ENCODE measurements at regions of chr4 and their contacts with region 1.

Region 1: DNA sequence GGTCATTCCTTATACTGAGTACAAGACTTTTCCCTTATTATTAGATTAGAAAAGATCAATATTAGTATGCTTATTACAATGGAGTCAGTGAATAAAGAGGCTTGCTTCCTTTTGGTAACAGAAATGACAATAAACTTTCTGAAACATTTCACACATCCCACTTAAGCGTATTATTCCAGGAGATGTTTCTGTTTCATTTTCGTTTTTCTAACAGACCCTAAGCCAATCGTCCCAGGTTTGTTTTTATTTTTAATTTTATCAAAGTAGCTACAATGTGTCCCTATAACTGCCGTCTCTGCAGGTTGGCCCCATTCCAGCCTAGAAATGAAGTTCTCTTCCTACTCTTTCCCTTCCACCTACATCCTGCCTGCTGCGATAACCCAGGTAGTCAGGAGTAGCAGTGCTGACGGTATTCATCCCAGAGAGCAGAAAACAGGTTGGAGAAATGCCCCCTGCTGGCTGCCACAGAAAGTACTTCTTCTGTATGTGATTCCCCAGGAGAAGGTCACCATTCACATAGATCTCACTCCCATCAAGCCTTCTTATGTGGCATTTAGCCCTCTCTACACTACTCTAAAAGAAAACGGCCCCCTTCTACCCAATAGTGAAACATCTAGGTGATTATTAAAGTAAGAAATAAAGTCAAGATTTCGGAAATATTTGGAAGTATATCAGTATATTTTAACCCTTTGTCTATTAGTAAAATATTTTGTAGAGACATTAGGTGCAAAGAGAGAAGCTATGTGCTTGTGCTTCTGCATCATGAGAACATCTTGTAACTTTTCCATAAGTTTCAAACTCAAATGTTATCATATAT is 40.4 kb downstream of the ENPEP start:
- DNase-seq: peak; percentile 58 to 87
- ATAC-seq: peak; percentile 85 to 93 (median 92)
- H3K4me3 ChIP-seq: peak overlapping the region; percentile 69
- H3K4me3 Mint-ChIP-seq: peak overlapping the region; percentile 98
- H3K27ac ChIP-seq: peak overlapping the region; percentile 16
- H3K27ac Mint-ChIP-seq: peak overlapping the region; percentile 71 to 88
- H3K4me1 ChIP-seq: no peaks in the 10 kb centered on the region
- H3K4me1 Mint-ChIP-seq: peaks cover 18% of the 10 kb centered on the region in 2 donors
- H3K27me3 ChIP-seq: no peaks in the 10 kb centered on the region
- H3K27me3 Mint-ChIP-seq: peaks cover 8 to 33% of the 10 kb centered on the region in 2 donors
- CTCF ChIP-seq: peak; percentile 76

Region 2: GRCh38 chr4:109433205-109434006 is 1082.9 kb before region 1 on chr4 and contains the start of gene SEC24B:
- intact Hi-C with region 1: loop called (anchors 10 kb)
- DNase-seq: peak; percentile 87 to 95
- ATAC-seq: peak; percentile 85 to 94 (median 88)
- H3K4me3 ChIP-seq: peak within 1 kb of the TSS; percentile 87
- H3K4me3 Mint-ChIP-seq: peak within 1 kb of the TSS; percentile 84
- H3K27ac ChIP-seq: peak within 1 kb of the TSS; percentile 97
- H3K27ac Mint-ChIP-seq: peak within 1 kb of the TSS; percentile 87
- H3K4me1 ChIP-seq: peaks cover 33% of the 10 kb centered on the region
- H3K4me1 Mint-ChIP-seq: peaks cover 39 to 53% of the 10 kb centered on the region in 2 donors
- H3K27me3 ChIP-seq: no peaks in the 10 kb centered on the region
- H3K27me3 Mint-ChIP-seq: no peaks in the 10 kb centered on the region
- CTCF ChIP-seq: peak; percentile 95
- total RNA-seq, gene SEC24B: 38.6 to 43.9 (median 40.7) TPM

Region 3: GRCh38 chr4:109998867-109999584 is 517.3 kb before region 1 on chr4:
- intact Hi-C with region 1: loop called (anchors 1 kb)
- DNase-seq: peak in 1 of 2 donors; percentile 85
- ATAC-seq: peak; percentile 72 to 83 (median 76)
- H3K4me3 ChIP-seq: no peak overlapping the region
- H3K4me3 Mint-ChIP-seq: no peak overlapping the region
- H3K27ac ChIP-seq: no peak overlapping the region
- H3K27ac Mint-ChIP-seq: no peak overlapping the region
- H3K4me1 ChIP-seq: no peaks in the 10 kb centered on the region
- H3K4me1 Mint-ChIP-seq: no peaks in the 10 kb centered on the region
- H3K27me3 ChIP-seq: no peaks in the 10 kb centered on the region
- H3K27me3 Mint-ChIP-seq: peaks cover 0 to 19% of the 10 kb centered on the region in 2 donors
- CTCF ChIP-seq: peak; percentile 87

Region 4: GRCh38 chr4:110005461-110006056 is 510.8 kb before region 1 on chr4:
- intact Hi-C with region 1: loop called (anchors 1 kb)
- DNase-seq: peak in 1 of 2 donors; percentile 80
- ATAC-seq: peak; percentile 75 to 92 (median 90)
- H3K4me3 ChIP-seq: no peak overlapping the region
- H3K4me3 Mint-ChIP-seq: no peak overlapping the region
- H3K27ac ChIP-seq: no peak overlapping the region
- H3K27ac Mint-ChIP-seq: peak overlapping the region in 1 of 2 donors; percentile 36
- H3K4me1 ChIP-seq: no peaks in the 10 kb centered on the region
- H3K4me1 Mint-ChIP-seq: no peaks in the 10 kb centered on the region
- H3K27me3 ChIP-seq: no peaks in the 10 kb centered on the region
- H3K27me3 Mint-ChIP-seq: peaks cover 0 to 3% of the 10 kb centered on the region in 2 donors
- CTCF ChIP-seq: peak; percentile 83

Region 5: DNA sequence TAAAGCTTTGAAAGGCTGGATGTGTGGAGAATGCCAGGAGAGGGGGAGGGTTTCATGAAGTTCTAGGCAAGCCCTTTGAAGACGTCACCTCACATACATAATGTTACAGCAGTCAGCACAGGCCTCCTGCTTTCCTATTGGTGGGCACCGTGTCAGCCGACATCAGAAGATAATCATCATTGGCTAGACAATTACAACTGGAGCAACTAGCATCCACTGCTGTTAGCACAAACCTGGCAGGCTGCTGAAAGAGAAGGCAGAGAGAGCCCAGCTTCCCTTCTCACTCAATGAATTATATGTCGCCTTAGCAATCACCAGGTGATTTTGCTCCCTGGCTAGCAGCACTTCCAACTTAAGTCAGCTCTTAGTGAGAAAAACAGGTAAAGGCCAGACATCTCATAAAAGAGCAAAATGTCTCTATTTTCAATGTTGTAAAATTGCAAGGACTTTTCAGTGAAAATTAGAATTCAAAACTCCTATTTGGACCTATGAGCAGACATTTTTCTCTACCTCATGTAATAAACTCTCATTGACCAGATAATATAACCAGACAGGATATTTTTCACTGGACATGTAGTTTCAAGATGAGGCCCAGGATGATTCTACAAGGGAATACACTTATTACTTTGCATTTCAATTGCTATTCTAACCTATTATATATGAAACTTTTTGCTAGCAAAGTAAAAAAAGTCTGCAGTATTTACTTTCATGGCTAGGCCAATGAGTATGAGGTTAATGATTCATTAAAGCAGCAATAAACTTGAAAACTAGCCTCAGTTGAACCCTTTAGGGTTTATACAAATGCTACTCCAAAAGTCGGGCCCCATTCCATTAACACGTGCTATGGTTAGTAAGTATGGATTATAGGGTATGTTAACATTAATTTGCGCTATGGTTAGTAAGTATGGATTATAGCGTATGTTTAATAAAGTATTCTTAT is 322.2 kb before region 1 on chr4:
- intact Hi-C with region 1: loop called (anchors 10 kb)
- DNase-seq: peak; percentile 62 to 89
- ATAC-seq: peak; percentile 72 to 83 (median 75)
- H3K4me3 ChIP-seq: no peak overlapping the region
- H3K4me3 Mint-ChIP-seq: peak overlapping the region; percentile 57
- H3K27ac ChIP-seq: peak overlapping the region; percentile 72
- H3K27ac Mint-ChIP-seq: peak overlapping the region; percentile 80 to 91
- H3K4me1 ChIP-seq: peaks cover 19% of the 10 kb centered on the region
- H3K4me1 Mint-ChIP-seq: peaks cover 36 to 47% of the 10 kb centered on the region in 2 donors
- H3K27me3 ChIP-seq: no peaks in the 10 kb centered on the region
- H3K27me3 Mint-ChIP-seq: no peaks in the 10 kb centered on the region
- CTCF ChIP-seq: no peak

Region 6: GRCh38 chr4:110344162-110344561 is 172.2 kb before region 1 on chr4:
- intact Hi-C with region 1: loop called (anchors 2 kb)
- DNase-seq: no peak
- ATAC-seq: peak in 2 of 3 donors; percentile 30 to 53
- H3K4me3 ChIP-seq: no peak overlapping the region
- H3K4me3 Mint-ChIP-seq: no peak overlapping the region
- H3K27ac ChIP-seq: no peak overlapping the region
- H3K27ac Mint-ChIP-seq: no peak overlapping the region
- H3K4me1 ChIP-seq: no peaks in the 10 kb centered on the region
- H3K4me1 Mint-ChIP-seq: no peaks in the 10 kb centered on the region
- H3K27me3 ChIP-seq: no peaks in the 10 kb centered on the region
- H3K27me3 Mint-ChIP-seq: peaks cover 23 to 24% of the 10 kb centered on the region in 2 donors
- CTCF ChIP-seq: no peak

Region 7: DNA sequence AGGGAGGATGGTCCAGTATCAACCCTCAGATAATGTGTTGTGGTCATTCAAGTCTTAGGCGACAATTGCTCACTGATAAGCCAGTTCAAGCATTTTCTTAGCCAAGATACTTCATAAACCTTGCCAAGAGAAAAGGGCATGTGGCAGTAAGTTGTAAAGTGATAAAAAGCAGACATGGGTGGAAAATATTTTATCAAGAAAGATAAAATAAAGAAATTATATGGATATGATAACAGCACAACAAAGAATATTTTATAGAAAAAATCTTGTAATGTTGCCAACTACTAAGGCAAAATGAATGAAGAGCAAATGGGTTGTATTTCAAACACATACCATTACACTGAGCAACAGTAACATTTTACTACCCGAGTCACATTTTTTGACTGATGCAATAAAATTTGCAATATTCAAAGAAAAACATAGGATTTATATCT is 323.9 kb after region 1 on chr4:
- intact Hi-C with region 1: no loop called
- DNase-seq: no peak
- ATAC-seq: no peak
- H3K4me3 ChIP-seq: no peak overlapping the region
- H3K4me3 Mint-ChIP-seq: no peak overlapping the region
- H3K27ac ChIP-seq: no peak overlapping the region
- H3K27ac Mint-ChIP-seq: no peak overlapping the region
- H3K4me1 ChIP-seq: no peaks in the 10 kb centered on the region
- H3K4me1 Mint-ChIP-seq: no peaks in the 10 kb centered on the region
- H3K27me3 ChIP-seq: no peaks in the 10 kb centered on the region
- H3K27me3 Mint-ChIP-seq: no peaks in the 10 kb centered on the region
- CTCF ChIP-seq: no peak